Psoas muscle (tissue), 8 donors: ENCODE measurements at regions of chr12 and their contacts with region 1.

Region 1: DNA sequence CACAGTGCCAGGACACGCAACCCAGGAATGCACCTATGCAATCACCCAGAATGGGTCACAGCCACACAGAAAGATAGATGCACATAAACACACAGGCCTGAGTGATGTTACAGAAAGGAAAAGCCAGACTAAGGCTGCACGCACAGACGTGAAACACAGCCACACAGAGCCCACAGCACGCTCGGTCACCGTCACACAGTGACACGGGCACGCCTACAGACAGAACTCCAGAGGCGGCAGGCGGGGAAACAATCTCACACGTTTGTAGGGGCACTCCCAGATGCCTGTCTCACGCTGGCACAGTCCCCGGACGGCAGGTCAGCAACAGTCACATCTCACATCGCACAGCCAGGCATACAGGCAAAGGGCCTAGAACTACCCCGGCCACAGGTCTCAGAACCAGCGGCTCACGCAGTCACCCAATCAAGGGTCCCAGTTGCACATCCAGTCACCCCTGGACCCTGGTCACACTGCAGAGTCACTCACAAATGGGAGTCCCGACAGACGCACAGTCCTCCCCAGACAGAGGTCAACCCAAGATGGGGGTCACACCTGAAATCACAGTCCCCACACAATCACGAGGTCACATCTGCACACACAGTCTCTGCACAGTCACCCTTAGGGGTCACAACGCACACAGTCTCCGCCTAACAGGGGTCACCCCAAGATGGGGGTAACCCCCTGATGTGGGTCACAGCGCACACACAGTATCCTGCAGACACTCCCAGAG is 790 bp downstream of the SSH1 start:
- DNase-seq: peak; percentile 77 to 90
- ATAC-seq: peak; percentile 44 to 62 (median 59)
- H3K4me3 ChIP-seq: peak overlapping the region; percentile 98
- H3K27ac ChIP-seq: peak overlapping the region; percentile 100
- H3K4me1 ChIP-seq: peaks cover 56% of the 10 kb centered on the region
- H3K27me3 ChIP-seq: no peaks in the 10 kb centered on the region
- CTCF ChIP-seq: no peak

Region 2: GRCh38 chr12:108562348-108563135 is 294.1 kb before region 1 on chr12 and contains the start of gene ISCU:
- intact Hi-C with region 1: loop called (anchors 5 to 10 kb)
- DNase-seq: peak; percentile 99
- ATAC-seq: peak; percentile 87 to 90 (median 88)
- H3K4me3 ChIP-seq: peak within 1 kb of the TSS; percentile 76
- H3K27ac ChIP-seq: peak within 1 kb of the TSS; percentile 97
- H3K4me1 ChIP-seq: peaks cover 55% of the 10 kb centered on the region
- H3K27me3 ChIP-seq: no peaks in the 10 kb centered on the region
- CTCF ChIP-seq: no peak
- total RNA-seq, gene ISCU: 148 to 225 (median 212) TPM

Region 3: GRCh38 chr12:108664338-108665258 is 192.0 kb before region 1 on chr12:
- intact Hi-C with region 1: loop called in 1 of 2 experiments (anchors 5 kb)
- DNase-seq: peak; percentile 75 to 85
- ATAC-seq: peak; percentile 91 to 95 (median 92)
- H3K4me3 ChIP-seq: no peak overlapping the region
- H3K27ac ChIP-seq: peak overlapping the region; percentile 86
- H3K4me1 ChIP-seq: peaks cover 58% of the 10 kb centered on the region
- H3K27me3 ChIP-seq: no peaks in the 10 kb centered on the region
- CTCF ChIP-seq: peak; percentile 94

Region 4: GRCh38 chr12:108712165-108712924 is 144.2 kb before region 1 on chr12:
- intact Hi-C with region 1: no loop called
- DNase-seq: no peak
- ATAC-seq: no peak
- H3K4me3 ChIP-seq: no peak overlapping the region
- H3K27ac ChIP-seq: peak overlapping the region; percentile 32
- H3K4me1 ChIP-seq: peaks cover 54% of the 10 kb centered on the region
- H3K27me3 ChIP-seq: no peaks in the 10 kb centered on the region
- CTCF ChIP-seq: no peak

Region 5: GRCh38 chr12:108803428-108804105 is 53.0 kb before region 1 on chr12:
- intact Hi-C with region 1: loop called in 1 of 2 experiments (anchors 10 kb)
- DNase-seq: peak in 1 of 2 donors; percentile 60
- ATAC-seq: peak; percentile 58 to 78 (median 70)
- H3K4me3 ChIP-seq: peak overlapping the region; percentile 47
- H3K27ac ChIP-seq: peak overlapping the region; percentile 91
- H3K4me1 ChIP-seq: peaks cover 58% of the 10 kb centered on the region
- H3K27me3 ChIP-seq: no peaks in the 10 kb centered on the region
- CTCF ChIP-seq: peak; percentile 97

Region 6: GRCh38 chr12:108838194-108839017 is 18.2 kb before region 1 on chr12:
- intact Hi-C with region 1: loop called in 1 of 2 experiments (anchors 2 kb)
- DNase-seq: peak; percentile 92 to 95
- ATAC-seq: peak; percentile 94 to 95 (median 94)
- H3K4me3 ChIP-seq: peak overlapping the region; percentile 24
- H3K27ac ChIP-seq: peak overlapping the region; percentile 97
- H3K4me1 ChIP-seq: peaks cover 81% of the 10 kb centered on the region
- H3K27me3 ChIP-seq: no peaks in the 10 kb centered on the region
- CTCF ChIP-seq: no peak

Region 7: DNA sequence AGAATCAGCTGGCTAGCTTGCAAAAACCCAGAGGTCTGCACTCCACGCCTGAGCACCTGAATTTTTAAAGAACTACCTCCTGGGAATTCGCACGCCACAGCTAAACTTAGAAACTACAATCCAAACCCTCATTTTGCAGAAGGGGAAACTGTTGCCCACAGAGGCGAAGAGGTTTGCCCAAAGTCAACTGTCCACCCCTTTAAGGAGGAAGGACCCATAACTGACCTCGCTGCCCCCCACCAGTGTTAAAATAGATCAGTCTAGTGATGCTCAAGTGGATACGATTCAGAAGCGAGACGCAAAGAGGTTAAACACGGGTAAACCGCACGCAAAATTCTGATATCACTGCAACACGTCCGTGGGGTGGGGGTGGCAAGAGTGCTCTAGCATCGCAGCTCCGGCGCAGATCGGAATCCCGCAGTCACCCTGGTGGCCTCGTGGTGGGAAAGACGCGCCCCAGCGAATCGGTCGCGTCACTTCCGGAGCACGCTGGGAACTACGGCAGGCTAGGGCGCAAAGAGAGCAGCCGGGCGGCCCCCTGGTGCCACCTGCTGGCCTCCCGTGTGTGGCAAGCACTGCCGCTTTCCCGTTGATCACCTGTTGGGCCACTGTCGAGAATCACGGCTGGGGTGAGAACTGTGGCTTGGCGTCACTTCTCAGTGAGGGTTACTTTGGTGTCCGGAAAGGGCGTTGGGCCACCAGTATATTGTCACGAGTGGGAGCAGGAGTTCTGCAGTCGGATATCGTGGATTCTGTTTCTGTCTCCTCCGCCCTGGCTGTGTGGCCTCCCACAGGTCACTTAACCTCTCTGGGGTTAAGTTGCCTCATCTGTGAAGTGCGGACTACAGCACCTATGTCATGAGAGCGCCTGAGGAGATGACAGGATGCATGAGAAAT is 236.7 kb after region 1 on chr12 and contains the start of gene ALKBH2:
- intact Hi-C with region 1: loop called in 1 of 2 experiments (anchors 10 kb)
- DNase-seq: peak; percentile 96 to 97
- ATAC-seq: peak; percentile 84 to 85 (median 84)
- H3K4me3 ChIP-seq: peak within 1 kb of the TSS; percentile 75
- H3K27ac ChIP-seq: peak within 1 kb of the TSS; percentile 82
- H3K4me1 ChIP-seq: peaks cover 13% of the 10 kb centered on the region
- H3K27me3 ChIP-seq: no peaks in the 10 kb centered on the region
- CTCF ChIP-seq: peak; percentile 97
- total RNA-seq, gene ALKBH2: 7.3 to 25.3 (median 17.7) TPM